HepG2 (cell line): ENCODE measurements at regions of chr18 and their contacts with region 1.

Region 1: GRCh38 chr18:3703732-3704176 is 253.8 kb downstream of the TGIF1 start:
- DNase-seq: peak; percentile 41
- ATAC-seq: peak; percentile 85
- H3K4me3 ChIP-seq: no peak overlapping the region
- H3K27ac ChIP-seq: no peak overlapping the region
- H3K4me1 ChIP-seq: peaks cover 11% of the 10 kb centered on the region
- H3K27me3 ChIP-seq: no peaks in the 10 kb centered on the region; a peak in 1 of 5 replicates
- CTCF ChIP-seq: peak; percentile 73
- EP300 ChIP-seq: no peak
- POLR2A ChIP-seq: no peak
- RAD21 ChIP-seq: peak; percentile 17; the same call in 1 of the 2 replicates

Region 2: GRCh38 chr18:3773303-3773702 is 69.5 kb after region 1 on chr18:
- CTCF ChIA-PET with region 1: no interaction called
- POLR2A ChIA-PET with region 1: no interaction called
- in situ Hi-C with region 1: no loop called
- intact Hi-C with region 1: no loop called
- DNase-seq: no peak
- ATAC-seq: no peak
- H3K4me3 ChIP-seq: no peak overlapping the region
- H3K27ac ChIP-seq: no peak overlapping the region
- H3K4me1 ChIP-seq: no peaks in the 10 kb centered on the region
- H3K27me3 ChIP-seq: peaks cover 0 to 18% of the 10 kb centered on the region in 2 experiments; a peak in 2 of 5 replicates
- CTCF ChIP-seq: no peak
- EP300 ChIP-seq: no peak
- POLR2A ChIP-seq: no peak
- RAD21 ChIP-seq: no peak

Region 3: GRCh38 chr18:3869848-3870247 is 166.1 kb after region 1 on chr18:
- CTCF ChIA-PET with region 1: interaction called, 5 read pairs
- POLR2A ChIA-PET with region 1: no interaction called
- in situ Hi-C with region 1: no loop called
- intact Hi-C with region 1: loop called (anchors 1 kb)
- DNase-seq: peak; percentile 36
- ATAC-seq: peak; percentile 70
- H3K4me3 ChIP-seq: no peak overlapping the region
- H3K27ac ChIP-seq: no peak overlapping the region
- H3K4me1 ChIP-seq: no peaks in the 10 kb centered on the region
- H3K27me3 ChIP-seq: 0 out of 5 replicates have a peak, but pooled peaks cover 0 to 7% of the 10 kb centered on the region in 2 experiments
- CTCF ChIP-seq: peak; percentile 55
- EP300 ChIP-seq: no peak
- POLR2A ChIP-seq: no peak
- RAD21 ChIP-seq: 0 out of 2 replicates have a peak, but pooled peaks have one; percentile 22